Activated CD8-positive, alpha-beta T cell treated with anti-CD3 and anti-CD28 coated beads, Interleukin-2, amount 10 ng/mL, durations not matched to agents 7 days and 5 days (primary cell): ENCODE measurements at regions of chr15 and their contacts with region 1.

Region 1: GRCh38 chr15:91852741-91853510 is 582 bp upstream of the SLCO3A1 start:
- DNase-seq: peak; percentile 74
- ATAC-seq: peak; percentile 80
- H3K4me3 Mint-ChIP-seq: peak overlapping the region; percentile 81
- H3K27ac Mint-ChIP-seq: peak overlapping the region; percentile 76
- H3K4me1 Mint-ChIP-seq: peaks cover 58% of the 10 kb centered on the region
- H3K27me3 Mint-ChIP-seq: peaks cover 10% of the 10 kb centered on the region

Region 2: DNA sequence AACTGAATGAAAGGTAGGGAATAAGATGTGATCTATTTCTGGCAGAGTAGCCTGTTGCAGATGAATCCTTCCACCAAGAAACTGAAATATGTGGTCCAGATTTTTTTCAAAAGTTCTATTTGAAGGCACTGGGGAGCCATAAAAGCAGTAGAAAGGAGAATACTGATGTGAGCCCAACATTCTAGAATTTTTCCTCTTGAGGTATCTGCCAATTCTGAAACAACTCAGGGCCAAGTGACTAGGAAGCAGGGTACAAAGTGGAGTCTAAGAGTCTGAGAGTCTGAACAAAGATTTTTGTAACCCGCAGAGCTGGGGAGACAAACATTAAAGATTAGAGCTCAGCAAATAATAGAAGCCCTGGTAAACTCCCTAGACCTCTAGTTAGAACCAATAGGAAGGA is 57.7 kb before region 1 on chr15:
- CTCF ChIA-PET with region 1: no interaction called
- POLR2A ChIA-PET with region 1: no interaction called
- DNase-seq: no peak
- ATAC-seq: no peak
- H3K4me3 Mint-ChIP-seq: no peak overlapping the region
- H3K27ac Mint-ChIP-seq: no peak overlapping the region
- H3K4me1 Mint-ChIP-seq: no peaks in the 10 kb centered on the region
- H3K27me3 Mint-ChIP-seq: peaks cover 25% of the 10 kb centered on the region

Region 3: GRCh38 chr15:91942676-91943576 is 90.0 kb after region 1 on chr15:
- CTCF ChIA-PET with region 1: interaction called, 20 read pairs
- POLR2A ChIA-PET with region 1: no interaction called
- DNase-seq: peak; percentile 60
- ATAC-seq: peak; percentile 85
- H3K4me3 Mint-ChIP-seq: peak overlapping the region; percentile 42
- H3K27ac Mint-ChIP-seq: no peak overlapping the region
- H3K4me1 Mint-ChIP-seq: peaks cover 22% of the 10 kb centered on the region
- H3K27me3 Mint-ChIP-seq: peaks cover 7% of the 10 kb centered on the region

Region 4: DNA sequence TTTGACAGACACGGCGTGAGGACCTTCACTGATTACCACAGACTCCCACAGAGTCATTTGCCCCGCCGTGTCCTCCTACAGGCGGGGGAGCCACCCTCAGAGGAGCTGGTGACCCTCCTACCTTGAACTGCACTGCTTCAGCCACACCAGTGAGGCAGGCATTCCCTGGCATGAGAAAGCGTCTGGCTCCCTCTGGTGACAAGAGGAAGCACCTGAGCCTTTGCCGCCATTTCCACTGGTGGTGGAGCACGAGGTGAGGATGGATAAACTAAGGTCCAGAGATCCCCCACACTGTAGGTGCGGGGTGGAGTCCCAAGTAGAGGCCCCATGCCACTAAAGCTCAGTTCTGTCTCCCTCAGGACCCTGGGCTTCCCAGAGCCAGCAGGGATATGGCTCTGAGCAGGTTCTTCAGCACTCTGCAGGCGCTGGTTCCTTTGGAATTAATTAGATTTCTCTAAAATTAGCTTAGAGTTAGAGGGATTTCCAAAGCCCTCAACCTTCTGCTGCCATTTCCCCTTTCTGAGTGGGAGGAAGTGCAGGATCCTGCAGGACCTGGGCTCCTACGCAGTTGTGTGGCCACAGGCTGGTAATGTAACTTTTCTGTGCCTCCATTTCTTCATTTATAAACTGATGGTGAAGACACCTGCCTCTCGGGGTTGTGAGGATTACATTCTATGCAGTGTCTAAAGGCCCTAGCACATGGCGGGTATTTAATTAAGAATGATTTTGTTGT is 224.6 kb after region 1 on chr15:
- CTCF ChIA-PET with region 1: interaction called, 51 read pairs
- POLR2A ChIA-PET with region 1: no interaction called
- DNase-seq: peak; percentile 75
- ATAC-seq: peak; percentile 75
- H3K4me3 Mint-ChIP-seq: no peak overlapping the region
- H3K27ac Mint-ChIP-seq: no peak overlapping the region
- H3K4me1 Mint-ChIP-seq: peaks cover 33% of the 10 kb centered on the region
- H3K27me3 Mint-ChIP-seq: no peaks in the 10 kb centered on the region